ENCODE measurements at regions of chr19 and their contacts with region 1.

Region 1: DNA sequence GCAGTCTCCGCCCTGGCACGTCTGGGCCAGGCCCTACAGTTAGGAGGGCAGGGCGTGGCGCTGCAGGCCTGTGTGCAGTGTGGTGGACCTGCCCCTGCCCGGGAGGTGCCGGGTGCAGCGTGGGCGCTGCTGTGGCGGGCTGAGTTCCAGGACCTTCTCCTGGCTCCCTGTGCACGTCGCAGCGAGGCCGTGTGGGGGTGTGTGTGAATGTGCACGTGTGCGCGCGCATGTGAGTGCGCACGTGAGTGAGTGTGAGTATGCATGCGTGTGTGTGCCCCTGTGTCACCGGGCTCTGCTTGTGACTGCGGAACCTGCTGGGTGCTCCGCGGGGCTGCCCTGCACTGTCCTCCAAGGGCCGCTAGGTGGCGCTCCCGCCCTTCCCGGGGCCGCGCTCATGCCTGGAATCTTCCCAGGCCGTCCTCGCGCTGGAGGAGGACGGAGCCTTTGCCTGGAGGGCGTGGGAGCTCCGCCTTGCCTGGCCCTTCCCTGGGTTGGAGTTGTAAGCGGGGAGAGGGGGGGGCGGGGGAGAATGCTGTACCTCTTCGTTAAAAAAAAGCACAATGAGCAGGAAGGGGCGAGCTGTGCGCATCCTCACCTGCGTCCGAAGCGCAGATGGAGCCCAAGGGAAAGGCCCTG is 79.3 kb downstream of the KDM4B start:
- DNase-seq: peak; percentile 80
- ATAC-seq: peak; percentile 88
- H3K4me3 ChIP-seq: no peak overlapping the region
- H3K4me3 Mint-ChIP-seq: no peak overlapping the region
- H3K27ac ChIP-seq: no peak overlapping the region
- H3K27ac Mint-ChIP-seq: peak overlapping the region; percentile 26
- H3K4me1 ChIP-seq: peaks cover 20 to 45% of the 10 kb centered on the region in 2 donors
- H3K4me1 Mint-ChIP-seq: peaks cover 22% of the 10 kb centered on the region
- H3K27me3 ChIP-seq: no peaks in the 10 kb centered on the region
- H3K27me3 Mint-ChIP-seq: no peaks in the 10 kb centered on the region
- CTCF ChIP-seq: peak; percentile 94

Region 2: GRCh38 chr19:4916292-4917082 is 131.7 kb before region 1 on chr19:
- CTCF ChIA-PET with region 1: no interaction called
- POLR2A ChIA-PET with region 1: interaction called, 10 read pairs
- intact Hi-C with region 1: no loop called
- DNase-seq: peak; percentile 73
- ATAC-seq: peak; percentile 66
- H3K4me3 ChIP-seq: peak overlapping the region; percentile 51 to 86 (median 81)
- H3K4me3 Mint-ChIP-seq: peak overlapping the region; percentile 99
- H3K27ac ChIP-seq: peak overlapping the region; percentile 40 to 87
- H3K27ac Mint-ChIP-seq: peak overlapping the region; percentile 97
- H3K4me1 ChIP-seq: peaks cover 35 to 50% of the 10 kb centered on the region in 2 donors
- H3K4me1 Mint-ChIP-seq: peaks cover 47% of the 10 kb centered on the region
- H3K27me3 ChIP-seq: no peaks in the 10 kb centered on the region
- H3K27me3 Mint-ChIP-seq: no peaks in the 10 kb centered on the region
- CTCF ChIP-seq: no peak

Region 3: DNA sequence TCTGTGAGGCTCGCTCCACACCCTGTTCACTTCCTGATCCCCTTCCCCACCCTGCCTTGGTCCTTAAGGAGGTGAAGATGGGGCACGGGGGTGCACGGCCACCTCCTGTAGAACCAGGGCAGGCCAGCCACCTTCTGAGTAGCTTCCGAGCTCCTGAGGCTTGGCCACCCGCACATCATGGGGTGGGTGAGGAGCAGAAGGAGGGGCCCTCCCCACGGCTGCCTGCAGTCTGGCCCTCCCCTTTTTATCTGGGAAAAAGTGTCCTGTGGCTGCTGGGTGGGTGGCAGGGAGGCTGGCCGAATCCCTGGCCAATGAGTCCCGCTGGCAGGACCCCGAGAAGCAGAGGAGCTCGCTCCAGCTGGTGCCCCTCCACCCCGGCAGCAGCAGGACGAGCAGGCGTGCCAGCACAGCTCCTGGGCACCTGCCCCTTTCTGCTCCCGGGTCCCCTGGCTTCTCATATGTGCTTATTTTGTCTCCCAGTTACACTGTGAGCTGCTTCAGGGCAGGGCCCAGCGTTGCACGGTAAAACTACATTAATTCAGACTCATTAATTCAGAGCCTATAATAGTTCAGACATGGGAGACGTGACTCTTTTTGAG is 55.7 kb after region 1 on chr19:
- CTCF ChIA-PET with region 1: no interaction called
- POLR2A ChIA-PET with region 1: no interaction called
- intact Hi-C with region 1: no loop called
- DNase-seq: no peak
- ATAC-seq: no peak
- H3K4me3 ChIP-seq: no peak overlapping the region
- H3K4me3 Mint-ChIP-seq: no peak overlapping the region
- H3K27ac ChIP-seq: no peak overlapping the region
- H3K27ac Mint-ChIP-seq: no peak overlapping the region
- H3K4me1 ChIP-seq: no peaks in the 10 kb centered on the region
- H3K4me1 Mint-ChIP-seq: no peaks in the 10 kb centered on the region
- H3K27me3 ChIP-seq: no peaks in the 10 kb centered on the region
- H3K27me3 Mint-ChIP-seq: no peaks in the 10 kb centered on the region
- CTCF ChIP-seq: no peak

Region 4: DNA sequence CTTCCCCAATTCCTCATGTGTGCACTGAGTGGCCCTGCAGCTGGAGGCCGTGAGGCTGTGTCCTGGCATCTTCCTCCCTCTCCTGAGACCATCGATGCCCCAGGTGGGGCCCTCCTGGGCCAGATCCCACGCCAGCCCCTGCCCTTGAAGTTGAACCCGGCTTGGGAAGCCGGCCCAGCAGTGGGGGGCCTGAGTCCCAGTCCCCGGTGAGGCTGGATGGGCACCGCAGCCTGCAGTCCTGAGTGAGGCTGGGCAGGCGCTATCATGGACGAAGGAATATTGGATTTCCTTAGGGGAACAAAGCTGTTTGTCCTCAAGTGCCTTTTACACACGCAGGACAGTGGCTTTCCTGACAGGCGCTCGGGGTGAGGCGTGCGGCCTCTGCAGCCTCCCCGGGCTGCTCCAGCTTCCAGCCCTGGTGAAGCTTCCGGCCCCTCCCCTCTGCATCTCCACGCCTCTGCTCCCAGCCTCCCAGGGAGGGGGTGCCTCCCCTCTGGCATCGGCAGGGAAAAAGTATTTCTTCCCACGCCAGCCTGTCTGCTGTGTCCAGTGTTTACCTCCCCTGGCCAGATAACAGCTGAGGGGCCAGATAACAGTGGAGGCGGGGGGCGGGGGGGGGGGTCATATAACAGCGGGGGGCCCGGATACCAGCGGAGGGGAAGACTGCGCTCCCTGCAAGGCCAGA is 80.2 kb after region 1 on chr19:
- CTCF ChIA-PET with region 1: interaction called, 11 read pairs
- POLR2A ChIA-PET with region 1: interaction called, 10 read pairs
- intact Hi-C with region 1: loop called (anchors 5 kb)
- DNase-seq: no peak
- ATAC-seq: no peak
- H3K4me3 ChIP-seq: peak overlapping the region in 4 of 5 experiments; percentile 31 to 53 (median 34)
- H3K4me3 Mint-ChIP-seq: peak overlapping the region; percentile 84
- H3K27ac ChIP-seq: peak overlapping the region; percentile 100
- H3K27ac Mint-ChIP-seq: peak overlapping the region; percentile 97
- H3K4me1 ChIP-seq: peaks cover 72 to 85% of the 10 kb centered on the region in 2 donors
- H3K4me1 Mint-ChIP-seq: peaks cover 80% of the 10 kb centered on the region
- H3K27me3 ChIP-seq: no peaks in the 10 kb centered on the region
- H3K27me3 Mint-ChIP-seq: no peaks in the 10 kb centered on the region
- CTCF ChIP-seq: no peak

Region 5: DNA sequence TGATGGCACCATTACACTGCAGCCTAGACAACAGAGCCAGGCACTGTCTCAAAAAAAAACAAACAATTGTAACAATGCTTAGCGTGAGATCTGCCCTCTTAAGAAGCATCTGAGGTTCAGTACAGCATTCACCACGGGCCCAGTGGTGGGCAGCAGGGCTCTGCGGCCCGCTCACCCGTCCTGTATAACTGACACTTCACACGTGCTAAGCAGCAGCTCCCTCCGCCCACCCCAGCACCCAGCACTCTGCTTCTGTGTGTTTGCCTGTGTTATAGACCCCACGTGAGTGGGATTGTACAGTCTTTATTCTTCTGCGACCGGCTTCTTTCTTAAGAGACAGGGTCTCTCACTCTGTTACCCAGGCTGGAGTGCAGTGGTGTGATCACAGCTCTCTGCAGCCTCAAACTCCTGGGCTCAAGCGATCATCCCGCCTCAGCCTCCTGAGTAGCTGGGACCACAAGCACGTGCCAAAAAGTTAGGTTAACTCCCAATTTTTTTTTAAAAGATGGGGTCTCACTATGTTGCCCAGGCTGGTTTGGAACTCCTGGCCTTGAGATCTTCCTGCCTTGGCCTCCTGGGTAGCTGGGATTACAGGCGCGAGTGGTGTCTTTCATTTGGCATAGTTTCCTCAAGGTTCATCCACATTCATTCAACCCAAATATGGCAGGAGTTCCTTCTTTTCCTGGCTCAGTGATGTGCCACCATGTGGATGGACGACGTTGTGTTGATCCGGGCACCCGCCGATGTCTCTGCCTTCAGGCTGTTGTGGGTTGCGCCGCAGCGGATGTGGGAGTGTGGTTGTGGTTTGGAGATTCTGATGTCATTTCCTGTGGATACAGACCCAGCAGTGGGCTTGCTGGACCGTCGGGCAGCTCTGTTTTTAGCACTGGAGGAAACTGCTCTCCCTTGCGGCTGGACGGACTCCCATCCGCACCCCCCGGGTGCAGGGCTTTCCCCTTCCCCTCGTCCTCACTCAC is 90.7 kb after region 1 on chr19:
- CTCF ChIA-PET with region 1: interaction called, 47 read pairs
- POLR2A ChIA-PET with region 1: interaction called, 3 read pairs
- intact Hi-C with region 1: loop called (anchors 5 kb)
- DNase-seq: peak; percentile 90
- ATAC-seq: peak; percentile 68
- H3K4me3 ChIP-seq: peak overlapping the region in 4 of 5 experiments; percentile 1 to 40 (median 20)
- H3K4me3 Mint-ChIP-seq: peak overlapping the region; percentile 85
- H3K27ac ChIP-seq: peak overlapping the region; percentile 59 to 63
- H3K27ac Mint-ChIP-seq: peak overlapping the region; percentile 97
- H3K4me1 ChIP-seq: peaks cover 70 to 99% of the 10 kb centered on the region in 2 donors
- H3K4me1 Mint-ChIP-seq: peaks cover 75% of the 10 kb centered on the region
- H3K27me3 ChIP-seq: no peaks in the 10 kb centered on the region
- H3K27me3 Mint-ChIP-seq: no peaks in the 10 kb centered on the region
- CTCF ChIP-seq: peak; percentile 13

Region 6: GRCh38 chr19:5154129-5154798 is 106.1 kb after region 1 on chr19:
- CTCF ChIA-PET with region 1: interaction called, 102 read pairs
- POLR2A ChIA-PET with region 1: interaction called, 4 read pairs
- intact Hi-C with region 1: loop called (anchors 1 kb)
- DNase-seq: peak; percentile 76
- ATAC-seq: peak; percentile 69
- H3K4me3 ChIP-seq: no peak overlapping the region
- H3K4me3 Mint-ChIP-seq: no peak overlapping the region
- H3K27ac ChIP-seq: no peak overlapping the region
- H3K27ac Mint-ChIP-seq: peak overlapping the region; percentile 67
- H3K4me1 ChIP-seq: peaks cover 0 to 9% of the 10 kb centered on the region in 2 donors
- H3K4me1 Mint-ChIP-seq: peaks cover 13% of the 10 kb centered on the region
- H3K27me3 ChIP-seq: no peaks in the 10 kb centered on the region
- H3K27me3 Mint-ChIP-seq: no peaks in the 10 kb centered on the region
- CTCF ChIP-seq: peak; percentile 72

Region 7: DNA sequence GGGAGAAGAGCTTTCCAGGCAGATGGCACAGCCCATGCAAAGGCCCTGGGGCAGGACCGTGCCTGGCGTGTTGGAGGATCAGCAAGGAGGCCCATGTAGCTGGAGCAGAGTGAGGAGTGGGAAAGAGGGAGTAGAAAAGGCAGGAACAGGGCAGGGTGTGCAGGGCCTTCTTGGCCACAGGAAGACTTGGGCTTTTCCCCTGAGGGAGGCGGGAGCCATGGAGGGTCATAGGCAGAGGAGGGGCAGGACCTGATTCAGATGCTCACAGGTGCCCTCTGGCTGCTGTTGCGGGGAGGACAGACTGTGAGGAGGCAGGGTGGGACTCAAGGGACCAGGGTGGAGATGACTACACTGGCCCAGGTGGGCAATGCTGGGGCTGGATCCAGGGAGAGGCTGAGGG is 306.2 kb after region 1 on chr19:
- CTCF ChIA-PET with region 1: no interaction called
- POLR2A ChIA-PET with region 1: no interaction called
- intact Hi-C with region 1: loop called (anchors 10 kb)
- DNase-seq: no peak
- ATAC-seq: peak; percentile 41
- H3K4me3 ChIP-seq: no peak overlapping the region
- H3K4me3 Mint-ChIP-seq: no peak overlapping the region
- H3K27ac ChIP-seq: no peak overlapping the region
- H3K27ac Mint-ChIP-seq: no peak overlapping the region
- H3K4me1 ChIP-seq: no peaks in the 10 kb centered on the region
- H3K4me1 Mint-ChIP-seq: no peaks in the 10 kb centered on the region
- H3K27me3 ChIP-seq: peaks cover 0 to 26% (median 0%) of the 10 kb centered on the region in 4 experiments
- H3K27me3 Mint-ChIP-seq: peaks cover 30% of the 10 kb centered on the region
- CTCF ChIP-seq: no peak

Region 8: DNA sequence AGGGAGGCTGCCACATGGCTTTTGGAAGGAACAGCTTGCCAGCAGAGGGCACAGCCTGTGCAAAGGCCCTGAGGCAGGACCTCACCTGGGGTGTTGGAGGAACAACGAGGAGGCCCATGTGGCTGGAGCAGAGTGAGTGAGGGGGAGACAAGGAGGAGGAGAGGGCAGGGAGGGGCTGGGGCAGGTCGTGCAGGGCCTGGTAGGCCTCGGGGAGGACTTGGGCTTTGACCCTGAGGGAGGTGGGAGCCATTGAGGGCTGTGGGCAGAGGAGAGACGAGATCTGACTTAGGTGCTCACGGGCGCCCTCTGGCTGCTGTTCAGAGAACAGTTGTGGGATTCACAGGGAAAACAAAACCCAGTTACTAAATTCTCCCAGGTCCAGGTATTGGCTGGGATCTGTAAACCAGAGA is 432.2 kb after region 1 on chr19:
- CTCF ChIA-PET with region 1: interaction called, 3 read pairs
- POLR2A ChIA-PET with region 1: no interaction called
- intact Hi-C with region 1: loop called (anchors 2 kb)
- DNase-seq: peak; percentile 43
- ATAC-seq: no peak
- H3K4me3 ChIP-seq: no peak overlapping the region
- H3K4me3 Mint-ChIP-seq: no peak overlapping the region
- H3K27ac ChIP-seq: no peak overlapping the region
- H3K27ac Mint-ChIP-seq: no peak overlapping the region
- H3K4me1 ChIP-seq: no peaks in the 10 kb centered on the region
- H3K4me1 Mint-ChIP-seq: no peaks in the 10 kb centered on the region
- H3K27me3 ChIP-seq: peaks cover 0 to 33% (median 2%) of the 10 kb centered on the region in 4 experiments
- H3K27me3 Mint-ChIP-seq: peaks cover 38% of the 10 kb centered on the region
- CTCF ChIP-seq: peak; percentile 60

Measured in B cell (primary cell).